Ascending aorta (tissue), 2 donors: ENCODE measurements at regions of chr11 and their contacts with region 1.

Region 1: GRCh38 chr11:134863294-134863693 is 451.3 kb upstream of the B3GAT1 start:
- DNase-seq: no peak
- H3K4me3 ChIP-seq: no peak overlapping the region
- H3K27ac ChIP-seq: no peak overlapping the region
- H3K4me1 ChIP-seq: no peaks in the 10 kb centered on the region
- H3K27me3 ChIP-seq: no peaks in the 10 kb centered on the region
- CTCF ChIP-seq: no peak

Region 2: DNA sequence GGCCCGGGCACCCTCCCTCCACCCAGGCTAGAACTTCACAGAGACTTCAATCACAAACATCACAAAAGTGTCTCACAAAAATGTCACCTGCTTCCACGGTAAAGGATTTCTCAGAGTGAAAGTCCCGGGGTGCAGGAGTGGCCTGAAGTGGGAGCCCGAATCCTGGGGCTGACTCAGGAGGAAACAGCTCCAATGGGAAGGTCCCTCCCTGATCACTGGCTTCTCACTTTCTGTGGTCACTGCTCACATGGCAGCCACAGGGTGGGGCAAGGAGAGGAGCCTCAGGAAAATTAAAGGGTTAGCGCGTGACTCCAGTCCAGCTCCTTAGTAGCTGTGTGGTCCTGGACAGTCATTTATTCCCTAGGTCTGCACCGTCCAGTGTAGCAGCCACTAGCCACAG is 113.3 kb after region 1 on chr11:
- intact Hi-C with region 1: loop called (anchors 2 kb)
- DNase-seq: no peak
- H3K4me3 ChIP-seq: no peak overlapping the region
- H3K27ac ChIP-seq: no peak overlapping the region
- H3K4me1 ChIP-seq: no peaks in the 10 kb centered on the region
- H3K27me3 ChIP-seq: no peaks in the 10 kb centered on the region
- CTCF ChIP-seq: no peak

Region 3: DNA sequence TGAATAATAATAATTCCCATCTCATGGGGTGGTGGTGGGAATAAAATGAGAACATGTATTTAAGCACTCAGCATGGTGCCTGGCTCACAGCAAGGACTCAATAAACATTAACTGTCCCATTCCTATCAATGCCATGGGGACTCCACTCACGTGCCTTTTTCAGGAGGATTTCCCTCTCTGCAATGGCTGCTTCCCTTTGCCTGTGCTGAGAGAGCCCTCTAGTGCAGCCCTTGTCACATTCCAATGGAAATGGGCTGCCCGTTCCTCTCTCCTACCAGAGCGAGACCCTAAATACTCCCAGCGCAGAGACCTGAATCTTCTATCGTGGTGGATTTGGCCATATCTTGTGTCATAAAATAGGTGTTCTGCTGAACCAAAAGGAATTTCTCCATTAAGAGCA is 170.2 kb after region 1 on chr11:
- intact Hi-C with region 1: loop called (anchors 1 kb)
- DNase-seq: no peak
- H3K4me3 ChIP-seq: no peak overlapping the region
- H3K27ac ChIP-seq: no peak overlapping the region
- H3K4me1 ChIP-seq: no peaks in the 10 kb centered on the region
- H3K27me3 ChIP-seq: no peaks in the 10 kb centered on the region
- CTCF ChIP-seq: peak in 1 of 3 experiments; percentile 42